Right cardiac atrium (tissue), 5 donors: ENCODE measurements at regions of chr21 and their contacts with region 1.

Region 1: GRCh38 chr21:39715804-39716397 is 29.1 kb upstream of the IGSF5 start:
- DNase-seq: peak in 2 of 3 donors; percentile 50 to 67
- ATAC-seq: peak in 1 of 2 donors; percentile 41
- H3K4me3 ChIP-seq: no peak overlapping the region
- H3K27ac ChIP-seq: no peak overlapping the region
- H3K4me1 ChIP-seq: no peaks in the 10 kb centered on the region
- H3K27me3 ChIP-seq: no peaks in the 10 kb centered on the region

Region 2: DNA sequence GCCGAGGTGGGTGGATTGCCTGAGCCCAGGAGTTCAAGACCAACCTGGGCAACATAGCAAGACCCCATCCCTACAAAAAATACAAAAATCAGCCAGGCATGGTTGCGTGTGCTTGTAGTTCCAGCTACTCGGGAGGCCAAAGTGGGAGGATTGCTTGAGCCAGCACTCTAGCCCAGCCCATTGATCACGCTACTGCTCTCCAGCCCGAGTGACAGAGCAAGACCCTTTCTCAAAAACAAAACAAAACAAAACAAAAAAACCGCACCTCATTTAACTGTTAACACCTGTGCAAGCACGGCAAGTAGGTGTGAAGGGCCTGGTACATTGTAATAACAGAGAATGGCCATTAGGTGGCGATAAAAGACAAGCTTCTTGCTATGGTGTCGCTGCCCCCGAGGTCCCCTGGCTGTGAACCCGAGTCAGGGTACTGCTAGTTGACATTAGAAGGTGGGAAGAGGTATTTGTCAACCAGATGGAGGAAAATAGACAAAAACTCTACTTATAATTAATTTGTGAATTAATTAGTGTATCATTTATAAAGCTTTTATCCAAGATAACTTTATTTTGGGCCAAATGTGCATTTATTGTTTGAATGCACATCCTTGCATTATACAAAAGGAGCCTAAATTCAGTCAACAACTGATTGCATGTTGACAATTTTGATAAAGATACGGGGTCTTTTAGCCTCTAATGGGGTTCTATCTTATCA is 197.6 kb before region 1 on chr21:
- intact Hi-C with region 1: loop called in 3 of 4 experiments (anchors 2 kb)
- DNase-seq: peak in 2 of 3 donors; percentile 42 to 75
- ATAC-seq: peak; percentile 76 to 79
- H3K4me3 ChIP-seq: no peak overlapping the region
- H3K27ac ChIP-seq: no peak overlapping the region
- H3K4me1 ChIP-seq: no peaks in the 10 kb centered on the region
- H3K27me3 ChIP-seq: no peaks in the 10 kb centered on the region

Region 3: GRCh38 chr21:39527664-39528381 is 188.1 kb before region 1 on chr21:
- intact Hi-C with region 1: loop called in 1 of 4 experiments (anchors 5 kb)
- DNase-seq: no peak
- ATAC-seq: no peak
- H3K4me3 ChIP-seq: no peak overlapping the region
- H3K27ac ChIP-seq: no peak overlapping the region
- H3K4me1 ChIP-seq: no peaks in the 10 kb centered on the region
- H3K27me3 ChIP-seq: no peaks in the 10 kb centered on the region